Dorsolateral prefrontal cortex (tissue), 120 donors: ENCODE measurements at regions of chr10 and their contacts with region 1.

Region 1: GRCh38 chr10:132142411-132143161 is 44.2 kb upstream of the DPYSL4 start:
- DNase-seq: peak; percentile 43 to 75 (median 51)
- H3K4me3 ChIP-seq: no peak overlapping the region
- H3K27ac ChIP-seq: peak overlapping the region in 52 of 59 donors; percentile 4 to 85 (median 62)
- H3K27me3 ChIP-seq: no peaks in the 10 kb centered on the region
- CTCF ChIP-seq: peak; percentile 44 to 94 (median 88)

Region 2: DNA sequence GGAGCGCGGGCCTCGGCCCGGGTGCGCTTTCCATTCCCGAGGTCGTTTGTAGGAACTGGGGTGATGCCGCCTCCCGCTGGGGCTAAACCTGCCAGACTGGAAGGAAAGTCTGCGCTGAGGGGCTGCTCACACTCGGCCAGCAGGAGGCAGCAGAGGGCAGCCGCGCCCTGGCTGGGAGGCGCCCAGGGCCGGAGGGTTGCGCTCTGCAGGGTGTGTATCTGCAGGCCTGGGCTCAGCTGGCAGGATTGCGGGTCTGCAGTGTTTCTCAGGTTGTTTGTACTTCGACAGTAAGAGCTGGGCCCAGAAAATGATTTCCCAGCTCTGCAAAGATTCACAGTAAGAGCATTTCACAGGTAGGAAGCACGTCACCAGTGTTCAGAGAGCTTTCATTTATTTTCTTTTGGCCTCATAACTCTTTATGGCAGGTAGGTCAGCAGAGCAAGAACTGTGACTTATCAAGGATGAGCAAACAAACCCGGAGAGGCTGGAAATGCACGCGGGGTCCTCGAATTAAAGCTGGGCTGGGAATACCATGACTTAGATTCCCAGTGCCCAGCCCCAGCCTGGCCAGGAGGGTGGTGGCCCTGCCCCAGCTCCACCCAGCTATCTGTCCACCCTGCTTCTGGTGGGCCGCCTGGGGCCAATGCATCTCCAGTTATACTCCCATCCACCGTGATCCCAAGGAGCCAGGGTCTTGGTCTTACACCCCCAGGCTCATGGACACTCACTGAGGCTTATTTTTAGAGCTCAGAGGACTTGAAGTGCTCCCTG is 257.0 kb before region 1 on chr10:
- intact Hi-C with region 1: loop called (anchors 5 kb)
- DNase-seq: peak; percentile 32 to 82 (median 66)
- H3K4me3 ChIP-seq: peak overlapping the region in 6 of 59 donors; percentile 4 to 27 (median 20)
- H3K27ac ChIP-seq: no peak overlapping the region
- H3K27me3 ChIP-seq: peaks cover 0 to 8% (median 0%) of the 10 kb centered on the region in 45 donors
- CTCF ChIP-seq: peak; percentile 67 to 99 (median 95)

Region 3: GRCh38 chr10:131981429-131982184 is 161.0 kb before region 1 on chr10 and contains the start of gene BNIP3:
- intact Hi-C with region 1: loop called in 1 of 2 experiments (anchors 5 kb)
- DNase-seq: peak; percentile 75 to 97 (median 88)
- H3K4me3 ChIP-seq: peak within 1 kb of the TSS; percentile 59 to 99 (median 92)
- H3K27ac ChIP-seq: peak within 1 kb of the TSS in 58 of 59 donors; percentile 20 to 94 (median 81)
- H3K27me3 ChIP-seq: no peaks in the 10 kb centered on the region
- CTCF ChIP-seq: peak in 6 of 56 donors; percentile 7 to 18 (median 11)
- total RNA-seq, gene BNIP3: 73.1 to 211 (median 119) TPM

Region 4: GRCh38 chr10:132048294-132048667 is 94.3 kb before region 1 on chr10:
- intact Hi-C with region 1: loop called (anchors 5 kb)
- DNase-seq: no peak
- H3K4me3 ChIP-seq: no peak overlapping the region
- H3K27ac ChIP-seq: peak overlapping the region in 33 of 59 donors; percentile 6 to 91 (median 57)
- H3K27me3 ChIP-seq: no peaks in the 10 kb centered on the region
- CTCF ChIP-seq: no peak

Region 5: GRCh38 chr10:132101529-132101928 is 41.1 kb before region 1 on chr10:
- intact Hi-C with region 1: loop called (anchors 5 kb)
- DNase-seq: peak in 9 of 10 donors; percentile 7 to 64 (median 38)
- H3K4me3 ChIP-seq: no peak overlapping the region
- H3K27ac ChIP-seq: peak overlapping the region in 1 of 59 donors; percentile 38
- H3K27me3 ChIP-seq: no peaks in the 10 kb centered on the region
- CTCF ChIP-seq: peak in 53 of 56 donors; percentile 18 to 74 (median 51)

Region 6: DNA sequence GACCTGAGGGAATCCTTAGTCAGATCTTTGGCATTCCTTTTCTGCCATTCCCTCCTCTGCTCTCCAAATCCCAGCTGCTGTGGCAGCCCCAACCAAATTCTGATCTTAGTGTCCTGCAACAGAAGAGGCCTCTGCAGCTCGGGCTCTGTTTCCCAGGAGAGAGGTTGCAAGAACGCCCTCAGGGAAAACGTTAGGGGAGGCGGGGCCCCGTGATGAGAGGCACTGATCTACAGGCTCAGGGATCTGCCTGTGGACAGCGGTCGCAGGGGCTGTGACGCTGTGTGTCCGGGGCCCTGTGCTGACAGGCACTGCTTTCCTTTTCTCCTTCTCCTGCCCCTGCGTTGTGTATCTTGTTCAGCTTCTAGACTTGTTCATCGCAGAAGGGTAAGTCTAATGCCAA is 13.2 kb before region 1 on chr10:
- intact Hi-C with region 1: no loop called
- DNase-seq: peak in 2 of 10 donors; percentile 16 to 37
- H3K4me3 ChIP-seq: no peak overlapping the region
- H3K27ac ChIP-seq: no peak overlapping the region
- H3K27me3 ChIP-seq: no peaks in the 10 kb centered on the region
- CTCF ChIP-seq: no peak

Region 7: DNA sequence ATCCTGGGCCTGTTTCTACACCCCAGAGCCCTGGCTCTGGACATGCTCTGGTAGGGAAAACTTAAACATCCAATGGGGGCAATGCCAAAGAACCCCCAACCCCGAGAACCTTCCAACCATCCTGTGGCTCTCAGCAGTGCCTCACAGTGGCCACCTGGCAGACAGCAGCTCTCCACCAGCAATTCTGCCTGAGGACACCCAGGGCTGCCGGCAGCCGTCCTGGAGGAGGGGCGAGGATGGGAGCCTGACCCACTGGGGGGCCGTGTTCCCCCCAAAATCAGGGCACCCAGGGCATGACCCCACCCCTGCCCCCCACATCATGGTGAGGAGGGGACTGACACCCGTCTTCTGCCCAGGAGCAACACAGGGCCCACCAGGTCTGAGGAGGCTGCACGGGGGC is 76.9 kb after region 1 on chr10:
- intact Hi-C with region 1: no loop called
- DNase-seq: no peak
- H3K4me3 ChIP-seq: no peak overlapping the region
- H3K27ac ChIP-seq: no peak overlapping the region
- H3K27me3 ChIP-seq: no peaks in the 10 kb centered on the region
- CTCF ChIP-seq: no peak